HepG2 (cell line): ENCODE measurements at regions of chr14 and their contacts with region 1.

Region 1: GRCh38 chr14:73851644-73852382 is at the start of gene PTGR2:
- DNase-seq: peak; percentile 97
- ATAC-seq: peak; percentile 91
- H3K4me3 ChIP-seq: peak within 1 kb of the TSS; percentile 72 to 75 (median 72)
- H3K27ac ChIP-seq: peak within 1 kb of the TSS; percentile 95
- H3K4me1 ChIP-seq: peaks cover 46% of the 10 kb centered on the region
- H3K27me3 ChIP-seq: no peaks in the 10 kb centered on the region
- CTCF ChIP-seq: no peak
- EP300 ChIP-seq: no peak; a peak in 2 of 4 replicates
- POLR2A ChIP-seq: peak; percentile 88 to 97
- RAD21 ChIP-seq: no peak; the same call in 1 of the 2 replicates
- total RNA-seq, gene PTGR2: 4.3 and 5.1 TPM in 2 replicates

Region 2: DNA sequence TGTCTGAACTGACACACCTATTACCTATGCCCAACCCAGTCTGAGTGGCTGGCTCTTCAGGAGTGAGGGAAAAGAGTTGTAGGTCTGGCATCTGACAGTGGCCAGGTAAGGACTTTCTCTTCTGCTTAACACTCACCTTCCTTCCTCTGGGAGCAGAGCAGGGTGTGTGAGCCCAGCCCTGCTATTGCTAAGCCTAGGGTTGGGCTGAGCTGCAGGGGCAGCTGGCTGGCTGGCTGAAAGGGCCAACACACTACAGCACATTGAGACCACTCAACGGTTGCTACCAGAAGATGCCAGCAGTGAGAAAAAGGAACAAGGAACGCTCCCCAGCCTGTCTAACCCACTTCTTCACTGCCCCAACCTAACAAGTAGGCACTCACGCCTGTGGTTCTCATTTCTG is 1159.1 kb before region 1 on chr14:
- CTCF ChIA-PET with region 1: no interaction called
- POLR2A ChIA-PET with region 1: no interaction called
- in situ Hi-C with region 1: no loop called
- intact Hi-C with region 1: no loop called
- DNase-seq: no peak
- ATAC-seq: peak; percentile 60
- H3K4me3 ChIP-seq: no peak overlapping the region
- H3K27ac ChIP-seq: no peak overlapping the region
- H3K4me1 ChIP-seq: no peaks in the 10 kb centered on the region
- H3K27me3 ChIP-seq: no peaks in the 10 kb centered on the region
- CTCF ChIP-seq: no peak
- EP300 ChIP-seq: no peak
- POLR2A ChIP-seq: no peak
- RAD21 ChIP-seq: no peak

Region 3: GRCh38 chr14:73753959-73754882 is 97.6 kb before region 1 on chr14:
- CTCF ChIA-PET with region 1: no interaction called
- POLR2A ChIA-PET with region 1: interaction called, 19 read pairs
- in situ Hi-C with region 1: no loop called
- intact Hi-C with region 1: no loop called
- DNase-seq: no peak
- ATAC-seq: peak; percentile 37
- H3K4me3 ChIP-seq: peak overlapping the region; percentile 18 to 65 (median 43)
- H3K27ac ChIP-seq: peak overlapping the region; percentile 84
- H3K4me1 ChIP-seq: peaks cover 97% of the 10 kb centered on the region
- H3K27me3 ChIP-seq: no peaks in the 10 kb centered on the region
- CTCF ChIP-seq: no peak
- EP300 ChIP-seq: no peak
- POLR2A ChIP-seq: no peak; a peak in 1 of 4 replicates
- RAD21 ChIP-seq: 0 out of 2 replicates have a peak, but pooled peaks have one; percentile 2

Region 4: DNA sequence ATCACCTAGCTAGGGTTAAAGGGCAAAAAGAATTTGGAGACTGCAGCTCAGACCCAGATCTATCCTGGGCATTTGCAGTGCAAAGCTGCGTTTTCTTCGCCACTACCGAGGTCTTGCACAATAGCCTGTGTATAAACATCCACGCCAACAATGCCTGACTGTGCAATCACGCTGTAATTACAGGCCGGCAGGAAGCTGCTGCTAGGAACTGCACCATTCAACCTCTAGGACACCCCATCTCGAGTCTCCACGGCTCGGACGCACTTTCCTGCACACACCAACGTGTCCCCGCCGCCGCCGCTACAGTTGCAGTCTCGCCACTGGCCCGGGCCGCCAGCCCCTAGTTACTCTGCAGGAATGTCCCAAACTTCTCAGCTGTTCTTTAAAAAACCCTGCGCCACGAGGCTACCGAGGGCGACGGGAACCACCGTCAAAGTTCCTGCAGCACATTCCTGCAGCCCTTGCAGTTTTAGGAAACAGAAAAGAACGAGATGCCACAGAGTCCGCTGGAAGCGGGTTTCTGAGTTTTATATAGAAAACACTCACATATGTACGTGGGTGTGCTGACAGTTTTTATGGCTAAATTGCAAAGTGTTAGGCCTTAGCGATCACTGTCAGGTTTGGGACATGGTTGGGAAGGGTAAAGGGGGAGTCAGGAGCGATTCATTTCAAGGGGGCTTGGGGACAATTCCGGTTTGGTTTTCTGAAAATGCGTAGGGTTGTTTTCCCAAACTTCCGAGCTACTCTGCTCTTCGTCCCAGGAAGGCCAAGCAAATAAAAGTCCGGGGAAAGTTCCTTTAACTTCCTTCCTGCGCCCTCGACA is 65.7 kb before region 1 on chr14:
- CTCF ChIA-PET with region 1: no interaction called
- POLR2A ChIA-PET with region 1: interaction called, 30 read pairs
- in situ Hi-C with region 1: no loop called
- intact Hi-C with region 1: no loop called
- DNase-seq: peak; percentile 95
- ATAC-seq: peak; percentile 87
- H3K4me3 ChIP-seq: peak overlapping the region; percentile 76 to 80 (median 79)
- H3K27ac ChIP-seq: peak overlapping the region; percentile 86
- H3K4me1 ChIP-seq: peaks cover 70% of the 10 kb centered on the region
- H3K27me3 ChIP-seq: no peaks in the 10 kb centered on the region; a peak in 1 of 5 replicates
- CTCF ChIP-seq: peak; percentile 36; the same call in 1 of the 2 replicates
- EP300 ChIP-seq: peak; percentile 81 to 87; a peak in 3 of 4 replicates
- POLR2A ChIP-seq: peak; percentile 84 to 86
- RAD21 ChIP-seq: peak; percentile 60

Region 5: GRCh38 chr14:73833530-73834257 is 18.1 kb before region 1 on chr14:
- CTCF ChIA-PET with region 1: no interaction called
- POLR2A ChIA-PET with region 1: interaction called, 105 read pairs
- in situ Hi-C with region 1: no loop called
- intact Hi-C with region 1: loop called (anchors 1 kb)
- DNase-seq: peak; percentile 60
- ATAC-seq: peak; percentile 53
- H3K4me3 ChIP-seq: peak overlapping the region in 2 of 3 experiments; percentile 14 to 25; a peak in 4 of 6 replicates
- H3K27ac ChIP-seq: no peak overlapping the region
- H3K4me1 ChIP-seq: peaks cover 69% of the 10 kb centered on the region
- H3K27me3 ChIP-seq: peaks cover 0 to 2% of the 10 kb centered on the region in 2 experiments; a peak in 2 of 5 replicates
- CTCF ChIP-seq: no peak
- EP300 ChIP-seq: peak in 1 of 2 experiments; percentile 31; a peak in 1 of 4 replicates
- POLR2A ChIP-seq: no peak
- RAD21 ChIP-seq: no peak

Region 6: DNA sequence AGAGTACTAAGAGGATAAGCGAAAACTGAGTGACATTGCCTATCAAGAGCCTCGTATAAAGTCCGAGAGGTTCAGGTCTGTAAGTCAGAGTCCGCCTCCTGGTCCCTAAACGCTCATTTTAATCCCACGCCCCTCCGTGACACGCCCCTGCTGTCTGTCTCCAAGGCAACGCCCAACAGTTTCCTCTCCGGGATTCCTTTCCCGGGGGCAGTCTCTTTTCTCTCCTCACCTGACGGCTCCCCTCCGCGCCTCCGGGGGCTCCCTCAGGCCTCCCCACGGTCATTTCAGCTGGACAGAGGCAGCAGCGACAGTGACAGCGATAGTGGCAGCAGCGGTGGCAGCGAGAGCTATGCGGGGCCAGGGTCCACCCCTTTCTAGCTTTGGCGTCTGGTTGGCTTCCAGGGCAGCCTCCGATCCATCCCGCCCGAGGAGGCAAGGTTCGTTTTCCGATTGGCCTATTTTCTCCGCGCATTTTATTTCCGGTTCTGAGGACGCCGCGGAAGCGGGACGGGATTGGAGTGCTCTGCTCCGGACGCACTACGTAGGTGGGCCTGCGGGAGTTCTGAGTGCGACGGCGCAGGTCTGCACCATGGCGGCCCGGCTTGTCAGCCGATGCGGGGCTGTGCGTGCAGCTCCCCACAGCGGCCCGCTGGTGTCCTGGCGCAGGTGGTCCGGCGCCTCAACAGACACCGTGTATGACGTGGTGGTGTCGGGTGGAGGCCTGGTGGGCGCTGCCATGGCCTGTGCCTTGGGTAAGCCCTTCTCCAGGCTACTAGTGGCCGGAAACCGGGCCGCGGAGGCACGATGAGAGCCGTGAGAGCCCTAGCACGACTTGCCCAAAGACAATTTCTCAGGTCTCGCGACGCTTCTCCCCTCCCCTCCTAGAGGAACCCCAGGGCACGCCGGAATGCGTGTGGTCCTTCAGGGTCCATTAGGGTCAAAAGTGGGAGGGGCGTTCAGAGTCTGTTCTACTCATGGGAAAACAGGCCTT is 98.2 kb after region 1 on chr14 and contains the starts of genes COQ6 and FAM161B:
- CTCF ChIA-PET with region 1: no interaction called
- POLR2A ChIA-PET with region 1: interaction called, 11 read pairs
- in situ Hi-C with region 1: no loop called
- intact Hi-C with region 1: no loop called
- DNase-seq: peak; percentile 95
- ATAC-seq: peak; percentile 95
- H3K4me3 ChIP-seq: peak within 1 kb of the TSS; percentile 61 to 82 (median 78)
- H3K27ac ChIP-seq: peak within 1 kb of the TSS; percentile 99
- H3K4me1 ChIP-seq: peaks cover 11% of the 10 kb centered on the region
- H3K27me3 ChIP-seq: no peaks in the 10 kb centered on the region
- CTCF ChIP-seq: peak; percentile 55
- EP300 ChIP-seq: peak in 1 of 2 experiments; percentile 5; a peak in 1 of 4 replicates
- POLR2A ChIP-seq: peak; percentile 83 to 96
- RAD21 ChIP-seq: peak; percentile 60
- total RNA-seq, gene COQ6: 18.1 and 18.9 TPM in 2 replicates
- total RNA-seq, gene FAM161B: 1.6 and 2.0 TPM in 2 replicates

Region 7: DNA sequence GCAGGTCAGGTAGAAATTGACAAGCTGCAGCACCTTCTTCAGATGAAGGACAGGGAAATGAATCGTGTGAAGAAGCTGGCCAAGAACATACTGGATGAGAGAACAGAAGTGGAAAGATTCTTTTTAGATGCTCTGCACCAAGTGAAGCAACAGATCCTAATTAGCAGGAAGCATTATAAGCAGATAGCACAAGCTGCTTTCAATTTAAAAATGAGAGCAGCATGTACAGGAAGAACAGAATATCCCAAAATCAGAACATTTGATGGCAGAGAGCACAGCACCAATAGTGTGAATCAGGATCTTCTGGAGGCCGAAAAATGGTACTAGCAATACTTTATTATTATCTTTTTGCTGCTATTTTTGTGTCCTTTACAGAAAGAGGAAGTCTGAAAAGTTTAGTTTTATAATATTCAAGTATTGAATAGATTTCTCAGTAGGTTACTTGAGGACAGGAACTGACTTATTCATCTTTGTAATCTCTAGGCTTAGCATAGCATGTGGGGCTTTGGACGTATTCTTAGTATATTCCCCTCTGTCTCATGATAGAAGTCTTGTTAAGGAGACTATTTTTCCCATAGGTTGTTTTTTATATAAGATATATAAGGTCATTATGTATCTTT is 198.2 kb after region 1 on chr14:
- CTCF ChIA-PET with region 1: no interaction called
- POLR2A ChIA-PET with region 1: no interaction called
- in situ Hi-C with region 1: no loop called
- intact Hi-C with region 1: no loop called
- DNase-seq: no peak
- ATAC-seq: no peak
- H3K4me3 ChIP-seq: no peak overlapping the region
- H3K27ac ChIP-seq: no peak overlapping the region
- H3K4me1 ChIP-seq: peaks cover 8% of the 10 kb centered on the region
- H3K27me3 ChIP-seq: no peaks in the 10 kb centered on the region
- CTCF ChIP-seq: no peak
- EP300 ChIP-seq: no peak
- POLR2A ChIP-seq: no peak
- RAD21 ChIP-seq: no peak